Activated naive CD8-positive, alpha-beta T cell treated with anti-CD3 and anti-CD28 coated beads, Interleukin-2, amount 10 ng/mL, durations not matched to agents 7 days and 5 days (primary cell): ENCODE measurements at regions of chr2 and their contacts with region 1.

Region 1: GRCh38 chr2:181123798-181124231 is 143.4 kb downstream of the UBE2E3 start:
- DNase-seq: no peak
- ATAC-seq: peak; percentile 95
- H3K4me3 Mint-ChIP-seq: peak overlapping the region; percentile 84
- H3K27ac Mint-ChIP-seq: peak overlapping the region; percentile 90
- H3K4me1 Mint-ChIP-seq: peaks cover 49% of the 10 kb centered on the region
- H3K27me3 Mint-ChIP-seq: no peaks in the 10 kb centered on the region

Region 2: GRCh38 chr2:181140414-181140813 is 16.6 kb after region 1 on chr2:
- POLR2A ChIA-PET with region 1: interaction called, 64 read pairs
- DNase-seq: no peak
- ATAC-seq: no peak
- H3K4me3 Mint-ChIP-seq: peak overlapping the region; percentile 78
- H3K27ac Mint-ChIP-seq: peak overlapping the region; percentile 92
- H3K4me1 Mint-ChIP-seq: peaks cover 64% of the 10 kb centered on the region
- H3K27me3 Mint-ChIP-seq: no peaks in the 10 kb centered on the region

Region 3: DNA sequence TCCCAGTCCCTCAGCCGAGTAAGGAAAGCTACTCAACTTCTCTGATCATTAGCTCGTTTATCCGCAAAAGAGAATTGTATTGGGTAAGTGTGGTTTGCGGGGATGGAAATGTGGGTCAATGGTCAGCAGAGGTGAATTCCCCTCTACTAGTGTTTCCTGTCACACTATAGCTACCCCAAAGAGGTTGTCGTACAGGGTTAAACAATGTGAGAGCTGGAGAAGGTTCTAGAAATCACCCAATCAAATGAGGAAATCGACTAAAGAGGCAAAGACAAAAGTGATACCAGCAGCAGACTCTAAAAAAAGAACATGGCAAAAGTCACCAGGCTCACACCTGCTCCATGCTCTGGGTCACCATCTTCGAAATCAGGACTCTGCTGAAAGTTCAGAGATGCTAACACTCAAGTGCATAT is 188.7 kb after region 1 on chr2:
- POLR2A ChIA-PET with region 1: interaction called, 10 read pairs
- DNase-seq: peak; percentile 36
- ATAC-seq: peak; percentile 69
- H3K4me3 Mint-ChIP-seq: peak overlapping the region; percentile 91
- H3K27ac Mint-ChIP-seq: peak overlapping the region; percentile 99
- H3K4me1 Mint-ChIP-seq: peaks cover 44% of the 10 kb centered on the region
- H3K27me3 Mint-ChIP-seq: no peaks in the 10 kb centered on the region